Common myeloid progenitor, CD34-positive (primary cell): ENCODE measurements at regions of chr11 and their contacts with region 1.

Region 1: GRCh38 chr11:121655537-121656327 is 203.0 kb upstream of the SORL1-AS1 start:
- DNase-seq: peak; percentile 74 to 90 (median 88)
- H3K4me3 ChIP-seq: peak overlapping the region; percentile 19 to 78 (median 64)
- H3K27ac ChIP-seq: peak overlapping the region in 1 of 2 experiments; percentile 20
- H3K4me1 ChIP-seq: peaks cover 0 to 16% (median 12%) of the 10 kb centered on the region in 4 experiments
- H3K27me3 ChIP-seq: peaks cover 0 to 2% (median 0%) of the 10 kb centered on the region in 5 experiments

Region 2: DNA sequence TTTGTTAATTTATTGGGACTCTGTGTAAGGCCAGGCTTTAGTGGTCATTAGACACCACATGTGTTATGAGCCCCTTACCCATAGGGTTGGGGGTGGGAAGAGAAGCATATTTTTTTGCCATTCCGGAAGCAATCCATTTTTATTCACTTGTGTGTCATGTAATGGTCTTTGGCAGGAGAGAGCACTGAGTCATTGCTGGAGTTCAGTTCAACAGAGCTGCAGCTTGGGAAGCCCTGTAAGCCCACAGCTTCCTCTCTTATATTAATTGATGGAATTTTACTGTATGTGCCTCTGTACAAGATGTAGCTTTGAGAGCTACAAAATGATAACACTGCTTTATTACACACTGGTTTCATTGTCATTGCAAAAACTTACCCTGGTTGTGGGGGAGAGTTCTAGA is 25.7 kb before region 1 on chr11:
- CTCF ChIA-PET with region 1: interaction called, 11 read pairs
- POLR2A ChIA-PET with region 1: no interaction called
- DNase-seq: no peak
- H3K4me3 ChIP-seq: no peak overlapping the region
- H3K27ac ChIP-seq: no peak overlapping the region
- H3K4me1 ChIP-seq: no peaks in the 10 kb centered on the region
- H3K27me3 ChIP-seq: no peaks in the 10 kb centered on the region

Region 3: GRCh38 chr11:121643535-121644512 is 11.9 kb before region 1 on chr11:
- CTCF ChIA-PET with region 1: interaction called, 33 read pairs
- POLR2A ChIA-PET with region 1: no interaction called
- DNase-seq: no peak
- H3K4me3 ChIP-seq: no peak overlapping the region
- H3K27ac ChIP-seq: no peak overlapping the region
- H3K4me1 ChIP-seq: no peaks in the 10 kb centered on the region
- H3K27me3 ChIP-seq: no peaks in the 10 kb centered on the region

Region 4: DNA sequence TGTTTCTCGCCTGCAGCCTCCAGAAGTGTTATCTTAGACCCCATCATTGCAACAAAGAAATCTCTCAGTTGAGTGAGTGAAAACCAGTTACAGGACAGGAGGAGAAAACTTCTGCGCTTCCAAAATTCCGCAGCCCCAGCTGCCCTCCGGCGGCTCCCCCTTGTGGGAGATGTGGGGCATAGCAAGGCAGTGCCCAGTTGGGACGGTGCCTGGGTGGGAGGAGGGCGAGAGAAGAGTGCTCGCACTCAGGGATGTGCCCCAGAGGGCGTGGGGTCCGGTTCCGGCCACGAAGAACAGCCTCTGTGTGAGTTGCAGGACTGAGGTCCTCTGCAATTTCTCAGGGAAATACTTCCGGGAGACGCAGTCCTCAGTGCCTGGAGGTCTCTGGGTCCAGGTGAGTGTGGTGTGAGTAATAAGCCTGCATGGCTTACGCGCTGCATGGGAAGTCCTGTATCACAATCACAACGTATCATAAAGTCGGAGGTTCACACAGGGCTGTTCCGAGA is 547.3 kb after region 1 on chr11:
- CTCF ChIA-PET with region 1: interaction called, 51 read pairs
- POLR2A ChIA-PET with region 1: no interaction called
- DNase-seq: peak; percentile 34 to 57 (median 54)
- H3K4me3 ChIP-seq: no peak overlapping the region
- H3K27ac ChIP-seq: no peak overlapping the region
- H3K4me1 ChIP-seq: peaks cover 0 to 8% (median 0%) of the 10 kb centered on the region in 4 experiments
- H3K27me3 ChIP-seq: peaks cover 0 to 11% (median 3%) of the 10 kb centered on the region in 5 experiments

Region 5: DNA sequence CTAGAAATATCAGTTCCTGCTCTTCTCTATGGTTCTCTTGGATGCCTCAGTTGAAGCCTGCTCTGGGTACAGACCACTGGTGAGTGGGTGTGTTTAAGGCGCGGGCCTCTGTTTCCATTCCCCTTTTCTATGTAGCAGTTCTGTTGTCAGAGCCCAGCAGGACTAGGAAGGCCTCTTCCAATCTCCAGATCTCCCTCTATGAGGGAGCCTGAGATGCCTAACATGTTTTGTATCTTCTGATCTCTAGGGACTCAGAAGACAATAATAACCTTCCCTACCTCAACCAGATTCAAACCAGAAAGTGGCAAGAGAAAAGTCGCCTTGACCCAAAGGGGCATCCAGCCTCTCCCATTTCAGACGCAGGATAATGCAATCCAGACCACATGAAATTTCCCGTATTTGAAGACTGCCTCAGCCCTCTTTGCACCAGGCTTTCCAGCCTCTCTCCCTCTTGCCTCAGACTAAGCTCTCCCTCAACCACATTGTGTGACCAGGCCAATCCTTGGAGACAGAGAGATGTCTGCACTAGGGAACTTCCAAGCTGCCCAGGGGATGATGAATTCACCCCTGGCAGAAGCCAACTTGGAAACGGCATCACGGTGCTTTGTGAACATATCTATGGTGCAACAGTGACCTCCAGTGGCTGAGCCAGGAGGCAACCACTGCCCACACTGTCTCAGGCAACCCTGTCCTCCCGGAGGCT is 849.7 kb after region 1 on chr11:
- CTCF ChIA-PET with region 1: interaction called, 21 read pairs
- POLR2A ChIA-PET with region 1: no interaction called
- DNase-seq: peak; percentile 57 to 79 (median 75)
- H3K4me3 ChIP-seq: no peak overlapping the region
- H3K27ac ChIP-seq: no peak overlapping the region
- H3K4me1 ChIP-seq: peaks cover 0 to 4% (median 1%) of the 10 kb centered on the region in 4 experiments
- H3K27me3 ChIP-seq: peaks cover 0 to 2% (median 0%) of the 10 kb centered on the region in 5 experiments